SK-N-SH (cell line): ENCODE measurements at regions of chr6 and their contacts with region 1.

Region 1: DNA sequence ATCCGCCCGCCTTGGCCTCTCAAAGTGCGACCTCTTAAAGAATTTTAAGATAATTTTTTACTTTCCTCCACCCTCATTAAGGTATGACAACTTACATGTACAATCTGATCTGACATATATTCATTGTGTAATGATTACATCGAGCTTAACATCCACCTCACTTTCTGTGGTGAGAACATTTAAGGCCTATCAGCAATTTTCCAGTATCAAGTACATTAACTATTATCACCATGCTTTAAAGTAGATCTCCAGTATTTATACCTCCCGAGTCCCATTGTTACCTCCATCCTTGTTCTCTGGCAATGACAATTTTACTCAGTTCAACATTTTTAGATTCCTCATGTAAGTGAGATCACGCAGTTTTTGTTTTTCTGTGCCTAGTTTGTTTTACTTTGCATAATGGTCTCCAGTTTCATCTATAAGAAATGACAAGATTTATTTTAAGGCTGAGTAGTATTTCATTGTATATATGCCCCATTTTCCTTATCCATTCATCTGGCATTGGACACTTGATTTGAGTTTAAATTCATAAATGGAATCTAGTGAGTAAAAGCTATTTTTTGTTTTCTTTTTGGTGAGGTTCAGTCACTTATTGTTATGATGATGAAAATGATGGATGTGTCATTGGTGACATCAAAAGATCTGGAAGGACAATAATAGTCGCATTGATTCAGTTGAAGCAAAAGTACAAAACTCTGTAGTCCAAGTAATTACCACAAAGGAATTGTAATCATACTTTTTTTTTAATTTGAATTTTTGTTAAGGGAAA is 87.0 kb downstream of the OR2B2 start:
- DNase-seq: no peak
- H3K4me3 ChIP-seq: peak overlapping the region; percentile 86 to 98
- H3K27ac ChIP-seq: peak overlapping the region; percentile 89 to 93
- H3K4me1 ChIP-seq: no peaks in the 10 kb centered on the region; a peak in 3 of 4 replicates
- H3K27me3 ChIP-seq: no peaks in the 10 kb centered on the region
- CTCF ChIP-seq: no peak
- EP300 ChIP-seq: no peak
- RAD21 ChIP-seq: no peak

Region 2: DNA sequence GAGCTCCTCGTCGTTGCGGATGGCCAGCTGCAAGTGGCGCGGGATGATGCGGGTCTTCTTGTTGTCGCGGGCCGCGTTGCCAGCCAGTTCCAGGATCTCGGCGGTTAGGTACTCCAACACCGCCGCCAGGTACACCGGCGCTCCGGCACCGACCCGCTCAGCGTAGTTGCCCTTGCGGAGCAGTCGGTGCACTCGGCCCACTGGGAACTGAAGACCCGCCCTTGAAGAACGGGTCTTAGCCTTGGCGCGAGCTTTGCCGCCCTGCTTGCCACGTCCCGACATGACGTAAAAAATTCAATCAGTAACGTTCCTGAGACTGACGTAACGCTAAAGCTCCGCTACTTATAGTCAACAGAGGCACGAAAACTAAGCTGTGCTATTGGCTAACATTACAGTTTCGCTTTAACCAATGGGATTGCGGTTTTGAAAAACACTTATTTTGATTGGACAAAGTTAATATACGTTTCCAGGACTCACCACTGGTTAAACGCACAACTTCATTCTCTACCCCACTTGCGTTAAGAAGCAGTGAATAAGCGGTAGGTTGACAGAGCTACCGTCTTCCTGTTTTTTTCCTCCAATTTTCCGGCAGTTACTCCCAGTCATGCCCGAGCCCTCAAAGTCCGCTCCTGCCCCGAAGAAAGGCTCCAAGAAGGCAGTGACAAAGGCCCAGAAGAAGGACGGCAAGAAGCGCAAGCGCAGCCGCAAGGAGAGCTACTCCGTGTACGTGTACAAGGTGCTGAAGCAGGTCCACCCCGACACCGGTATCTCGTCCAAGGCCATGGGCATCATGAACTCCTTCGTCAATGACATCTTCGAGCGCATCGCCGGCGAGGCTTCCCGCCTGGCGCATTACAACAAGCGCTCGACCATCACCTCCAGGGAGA is 13.1 kb after region 1 on chr6:
- CTCF ChIA-PET with region 1: interaction called, 4 read pairs
- POLR2A ChIA-PET with region 1: interaction called, 80 read pairs
- DNase-seq: peak; percentile 84
- H3K4me3 ChIP-seq: peak overlapping the region; percentile 83 to 84
- H3K27ac ChIP-seq: peak overlapping the region; percentile 97 to 99
- H3K4me1 ChIP-seq: peaks cover 0 to 11% of the 10 kb centered on the region in 2 experiments; a peak in 2 of 4 replicates
- H3K27me3 ChIP-seq: no peaks in the 10 kb centered on the region
- CTCF ChIP-seq: no peak
- EP300 ChIP-seq: peak in 1 of 2 experiments; percentile 26; a peak in 1 of 4 replicates
- RAD21 ChIP-seq: no peak

Region 3: DNA sequence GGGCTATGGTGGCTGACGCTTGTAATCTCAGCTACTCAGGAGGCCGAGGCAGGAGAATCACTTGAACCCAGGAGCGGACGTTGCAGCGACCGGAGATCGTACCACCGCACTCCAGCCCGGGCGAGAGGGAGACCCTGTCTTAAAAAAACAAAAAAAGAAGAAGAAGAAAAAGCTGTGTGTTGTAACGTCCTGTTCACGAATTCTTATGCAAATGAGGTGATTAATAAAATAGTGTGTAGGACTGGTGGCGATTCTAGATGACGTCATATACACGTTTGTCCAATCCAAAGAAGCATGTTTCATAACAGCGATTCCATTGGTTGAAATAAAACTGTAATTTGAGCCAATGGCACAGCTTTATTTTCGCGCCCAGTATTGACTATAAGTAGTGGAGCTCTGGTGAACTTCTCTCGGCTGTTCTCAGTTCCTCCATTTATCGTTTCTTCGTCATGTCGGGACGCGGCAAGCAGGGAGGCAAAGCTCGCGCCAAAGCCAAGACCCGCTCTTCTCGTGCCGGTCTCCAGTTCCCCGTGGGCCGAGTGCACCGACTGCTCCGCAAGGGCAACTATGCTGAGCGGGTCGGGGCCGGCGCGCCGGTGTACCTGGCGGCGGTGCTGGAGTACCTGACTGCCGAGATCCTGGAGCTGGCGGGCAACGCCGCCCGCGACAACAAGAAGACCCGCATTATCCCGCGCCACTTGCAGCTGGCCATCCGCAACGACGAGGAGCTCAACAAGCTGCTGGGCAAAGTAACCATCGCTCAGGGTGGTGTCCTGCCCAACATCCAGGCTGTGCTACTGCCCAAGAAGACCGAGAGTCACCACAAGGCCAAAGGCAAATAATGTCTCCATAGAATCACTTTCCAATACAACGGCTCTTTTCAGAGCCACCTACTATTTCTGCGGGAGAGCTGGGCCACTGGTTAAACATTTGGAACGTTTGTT is 40.0 kb after region 1 on chr6:
- CTCF ChIA-PET with region 1: interaction called, 3 read pairs
- POLR2A ChIA-PET with region 1: interaction called, 578 read pairs
- DNase-seq: peak; percentile 85
- H3K4me3 ChIP-seq: peak overlapping the region; percentile 47 to 80
- H3K27ac ChIP-seq: peak overlapping the region; percentile 80 to 97
- H3K4me1 ChIP-seq: peaks cover 0 to 20% of the 10 kb centered on the region in 2 experiments; a peak in 2 of 4 replicates
- H3K27me3 ChIP-seq: no peaks in the 10 kb centered on the region
- CTCF ChIP-seq: no peak
- EP300 ChIP-seq: no peak; a peak in 1 of 4 replicates
- RAD21 ChIP-seq: no peak

Region 4: DNA sequence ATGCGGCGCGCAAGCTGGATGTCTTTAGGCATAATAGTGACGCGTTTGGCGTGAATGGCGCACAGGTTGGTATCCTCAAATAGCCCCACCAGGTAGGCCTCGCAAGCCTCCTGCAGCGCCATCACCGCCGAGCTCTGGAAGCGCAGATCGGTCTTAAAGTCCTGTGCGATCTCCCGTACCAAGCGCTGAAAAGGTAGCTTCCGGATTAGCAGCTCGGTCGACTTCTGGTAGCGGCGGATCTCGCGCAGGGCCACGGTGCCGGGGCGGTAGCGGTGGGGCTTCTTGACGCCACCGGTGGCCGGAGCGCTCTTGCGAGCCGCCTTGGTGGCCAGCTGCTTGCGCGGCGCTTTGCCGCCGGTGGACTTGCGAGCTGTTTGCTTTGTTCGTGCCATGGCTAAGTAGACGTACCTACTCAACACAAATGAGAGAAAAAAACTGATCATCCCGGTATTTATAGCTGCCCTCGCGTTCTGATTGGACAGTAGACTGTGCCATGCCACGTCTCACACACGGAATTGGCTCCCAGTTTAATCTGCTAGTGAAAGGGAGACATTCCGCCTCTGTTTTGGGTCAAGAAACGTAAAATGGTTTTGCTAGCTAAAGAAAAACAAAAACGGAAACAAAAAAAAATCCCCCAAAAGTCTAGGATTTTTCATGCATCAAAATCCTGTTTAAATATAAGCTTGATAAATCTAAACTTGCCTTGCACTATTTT is 46.9 kb after region 1 on chr6:
- CTCF ChIA-PET with region 1: interaction called, 3 read pairs
- POLR2A ChIA-PET with region 1: interaction called, 578 read pairs
- DNase-seq: peak; percentile 91
- H3K4me3 ChIP-seq: peak overlapping the region; percentile 68 to 71
- H3K27ac ChIP-seq: peak overlapping the region; percentile 80 to 97
- H3K4me1 ChIP-seq: peaks cover 0 to 10% of the 10 kb centered on the region in 2 experiments; a peak in 3 of 4 replicates
- H3K27me3 ChIP-seq: no peaks in the 10 kb centered on the region
- CTCF ChIP-seq: peak; percentile 39
- EP300 ChIP-seq: no peak
- RAD21 ChIP-seq: no peak

Region 5: GRCh38 chr6:28586962-28587745 is 761.9 kb after region 1 on chr6:
- CTCF ChIA-PET with region 1: no interaction called
- POLR2A ChIA-PET with region 1: no interaction called
- DNase-seq: peak; percentile 80
- H3K4me3 ChIP-seq: peak overlapping the region; percentile 66 to 90
- H3K27ac ChIP-seq: peak overlapping the region in 1 of 2 experiments; percentile 89; a peak in 3 of 4 replicates
- H3K4me1 ChIP-seq: peaks cover 11 to 14% of the 10 kb centered on the region in 2 experiments; a peak in 3 of 4 replicates
- H3K27me3 ChIP-seq: no peaks in the 10 kb centered on the region
- CTCF ChIP-seq: no peak
- EP300 ChIP-seq: no peak
- RAD21 ChIP-seq: no peak